Left cardiac atrium (tissue), 4 donors: ENCODE measurements at regions of chr5 and their contacts with region 1.

Region 1: DNA sequence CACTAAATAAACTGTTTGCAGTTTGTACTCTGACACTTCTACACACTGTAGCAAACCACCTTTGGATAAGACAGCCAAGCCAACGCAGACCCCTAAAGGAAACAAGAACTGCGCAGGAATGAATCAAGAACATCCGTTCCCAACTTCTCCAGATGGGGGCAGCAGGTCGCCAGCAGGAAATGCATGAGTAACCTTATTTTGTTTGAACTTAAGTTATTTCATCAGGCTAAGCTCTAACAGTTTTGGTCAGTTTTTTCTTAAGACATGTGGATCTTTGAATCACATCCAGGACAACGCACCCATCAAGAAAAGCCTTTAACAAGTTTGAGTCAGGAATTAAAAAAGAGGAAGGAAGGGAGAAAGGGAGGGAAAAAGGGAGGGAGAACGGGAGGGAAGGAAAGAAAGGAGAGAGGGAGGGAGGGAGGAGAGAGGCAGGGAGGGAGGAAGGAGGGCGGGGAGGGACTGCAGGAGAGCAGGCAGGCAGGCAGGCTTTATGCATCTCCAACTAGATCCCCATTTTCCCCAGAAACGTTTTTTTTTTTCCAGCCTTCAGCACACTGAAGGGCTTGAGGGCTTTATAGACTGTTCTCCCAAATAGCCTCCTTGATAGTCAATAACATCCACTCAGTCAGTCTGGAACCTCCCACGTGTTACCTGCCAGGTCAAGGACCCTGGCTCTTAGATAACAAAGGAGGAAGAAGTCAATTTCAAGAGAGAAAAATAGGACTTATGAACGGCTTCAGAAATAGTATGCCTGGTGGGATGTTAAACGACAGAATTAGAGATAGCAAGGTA is 22.2 kb downstream of the BHMT start:
- DNase-seq: peak; percentile 67
- ATAC-seq: peak; percentile 77 to 93

Region 2: GRCh38 chr5:79535477-79536192 is 401.8 kb after region 1 on chr5:
- intact Hi-C with region 1: loop called in 1 of 2 experiments (anchors 5 kb)
- DNase-seq: no peak
- ATAC-seq: peak in 1 of 2 donors; percentile 49